ENCODE measurements at regions of chr5 and their contacts with region 1.

Region 1: GRCh38 chr5:159049844-159050315 is 49.8 kb downstream of the EBF1 start:
- DNase-seq: no peak
- ATAC-seq: peak; percentile 1
- H3K4me3 ChIP-seq: peak overlapping the region; percentile 49
- H3K27ac ChIP-seq: peak overlapping the region; percentile 70
- H3K4me1 ChIP-seq: peaks cover 17% of the 10 kb centered on the region
- H3K27me3 ChIP-seq: no peaks in the 10 kb centered on the region
- CTCF ChIP-seq: peak; percentile 15 to 45 (median 32); a peak in 5 of 6 replicates
- EP300 ChIP-seq: no peak
- POLR2A ChIP-seq: no peak
- RAD21 ChIP-seq: peak; percentile 59

Region 2: GRCh38 chr5:159034083-159034824 is 15.6 kb before region 1 on chr5:
- CTCF ChIA-PET with region 1: interaction called, 16 read pairs
- POLR2A ChIA-PET with region 1: interaction called, 5 read pairs
- RAD21 ChIA-PET with region 1: interaction called, 10 read pairs
- SMC1A ChIA-PET with region 1: interaction called, 62 read pairs
- in situ Hi-C with region 1: no loop called
- intact Hi-C with region 1: no loop called
- DNase-seq: no peak
- ATAC-seq: peak; percentile 84
- H3K4me3 ChIP-seq: peak overlapping the region; percentile 33
- H3K27ac ChIP-seq: peak overlapping the region; percentile 61
- H3K4me1 ChIP-seq: peaks cover 37% of the 10 kb centered on the region
- H3K27me3 ChIP-seq: no peaks in the 10 kb centered on the region
- CTCF ChIP-seq: no peak
- EP300 ChIP-seq: no peak
- POLR2A ChIP-seq: no peak
- RAD21 ChIP-seq: no peak

Region 3: DNA sequence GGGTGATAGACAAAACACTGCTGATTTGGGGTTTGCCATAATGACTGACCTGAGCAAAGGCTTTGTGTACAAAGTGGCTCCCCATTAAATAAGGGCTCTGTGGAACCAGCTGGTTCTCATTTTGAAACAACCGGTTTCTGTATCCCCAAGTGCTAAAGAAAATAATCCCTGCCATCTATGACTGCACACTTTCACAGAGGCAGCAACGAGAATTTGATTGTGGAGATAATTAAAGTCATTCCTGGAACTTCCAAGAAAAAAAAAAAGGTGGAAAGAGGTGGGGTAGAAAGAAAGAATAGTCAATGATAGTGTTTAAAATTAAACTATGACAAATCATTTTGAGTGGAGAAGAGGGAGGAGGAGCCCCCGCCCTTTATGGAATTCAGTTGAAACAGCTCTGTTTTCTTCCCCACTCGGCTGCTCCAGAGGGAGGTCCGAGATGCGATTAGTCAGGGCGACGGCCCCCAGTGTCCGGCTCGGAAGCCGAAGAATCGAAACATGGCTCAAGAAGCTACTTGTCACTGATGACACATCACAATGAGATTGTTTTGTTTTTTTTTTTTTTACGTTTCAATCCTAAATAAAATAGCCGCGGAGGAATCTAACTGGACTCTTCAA is 11.4 kb after region 1 on chr5:
- CTCF ChIA-PET with region 1: interaction called, 4 read pairs
- POLR2A ChIA-PET with region 1: interaction called, 6 read pairs
- RAD21 ChIA-PET with region 1: interaction called, 11 read pairs
- SMC1A ChIA-PET with region 1: interaction called, 12 read pairs
- in situ Hi-C with region 1: no loop called
- intact Hi-C with region 1: no loop called
- DNase-seq: no peak
- ATAC-seq: peak; percentile 39
- H3K4me3 ChIP-seq: no peak overlapping the region
- H3K27ac ChIP-seq: no peak overlapping the region
- H3K4me1 ChIP-seq: peaks cover 12% of the 10 kb centered on the region; the same call in 1 of the 2 replicates
- H3K27me3 ChIP-seq: no peaks in the 10 kb centered on the region
- CTCF ChIP-seq: no peak
- EP300 ChIP-seq: no peak
- POLR2A ChIP-seq: no peak
- RAD21 ChIP-seq: no peak

Region 4: DNA sequence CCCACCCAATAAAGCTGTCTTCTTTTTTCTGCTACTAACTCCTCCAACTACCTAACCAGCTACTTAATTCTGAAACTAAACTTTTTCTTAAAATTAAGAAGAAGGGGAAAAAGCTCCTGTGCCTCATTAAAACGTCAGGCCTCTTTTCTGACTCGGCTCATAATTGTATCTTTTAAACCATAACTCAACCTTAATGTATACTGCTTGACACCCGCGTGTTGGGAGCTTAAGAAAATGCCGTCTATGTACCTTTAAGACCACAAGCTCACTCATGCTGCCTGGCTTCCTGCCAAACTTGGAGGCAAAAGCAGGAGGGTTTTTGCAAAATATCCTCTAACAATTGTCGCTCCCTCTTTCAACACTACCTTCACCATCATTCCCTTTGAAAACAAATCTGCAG is 44.9 kb after region 1 on chr5:
- CTCF ChIA-PET with region 1: interaction called, 5 read pairs
- POLR2A ChIA-PET with region 1: interaction called, 19 read pairs
- RAD21 ChIA-PET with region 1: interaction called, 14 read pairs
- SMC1A ChIA-PET with region 1: interaction called, 17 read pairs
- in situ Hi-C with region 1: no loop called
- intact Hi-C with region 1: loop called (anchors 2 kb)
- DNase-seq: no peak
- ATAC-seq: peak; percentile 35
- H3K4me3 ChIP-seq: peak overlapping the region; percentile 88
- H3K27ac ChIP-seq: peak overlapping the region; percentile 68
- H3K4me1 ChIP-seq: peaks cover 5% of the 10 kb centered on the region; the same call in 1 of the 2 replicates
- H3K27me3 ChIP-seq: no peaks in the 10 kb centered on the region
- CTCF ChIP-seq: no peak
- EP300 ChIP-seq: no peak
- POLR2A ChIP-seq: no peak
- RAD21 ChIP-seq: no peak

Region 5: DNA sequence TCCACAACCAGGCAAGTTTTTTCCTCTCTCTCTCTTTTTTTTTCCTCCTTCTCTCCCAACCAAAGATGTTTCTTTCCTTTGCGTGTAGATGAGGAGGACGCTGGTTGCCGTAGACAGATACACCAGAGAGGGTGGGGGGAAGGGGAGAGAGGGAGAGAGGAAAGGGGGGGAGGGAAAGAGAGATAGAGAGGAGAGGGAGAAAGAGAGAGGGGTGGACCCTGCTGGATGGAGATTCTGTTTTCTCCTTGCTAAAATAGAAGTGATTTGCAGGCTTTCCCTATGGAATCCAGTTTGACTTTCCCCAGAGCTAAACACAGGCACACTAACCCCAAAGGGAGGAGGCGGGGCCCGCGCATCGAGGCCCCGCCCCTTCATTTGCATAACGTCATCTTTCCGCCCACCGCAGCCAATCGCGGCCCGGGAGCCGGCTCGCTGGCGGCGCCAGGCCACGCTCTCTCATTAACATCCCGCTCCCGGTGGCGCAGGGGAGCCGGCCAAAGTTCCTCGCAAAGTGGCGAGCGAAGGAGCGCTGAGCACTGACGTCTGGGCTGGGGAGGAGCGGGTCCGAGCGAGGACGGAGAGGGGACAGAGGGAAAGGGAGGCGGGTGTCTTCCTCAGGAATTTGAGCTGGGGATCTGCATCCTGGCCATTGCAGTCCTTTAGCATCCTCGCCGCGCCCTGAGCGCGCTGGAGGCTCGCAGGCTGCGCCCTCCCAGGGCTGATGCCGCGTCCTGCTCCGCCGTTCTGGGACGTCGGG is 50.3 kb after region 1 on chr5:
- CTCF ChIA-PET with region 1: interaction called, 7 read pairs
- POLR2A ChIA-PET with region 1: interaction called, 5 read pairs
- RAD21 ChIA-PET with region 1: interaction called, 14 read pairs
- SMC1A ChIA-PET with region 1: interaction called, 16 read pairs
- in situ Hi-C with region 1: no loop called
- intact Hi-C with region 1: loop called (anchors 2 kb)
- DNase-seq: peak; percentile 81
- ATAC-seq: peak; percentile 58
- H3K4me3 ChIP-seq: peak overlapping the region; percentile 67
- H3K27ac ChIP-seq: peak overlapping the region; percentile 67
- H3K4me1 ChIP-seq: peaks cover 5% of the 10 kb centered on the region
- H3K27me3 ChIP-seq: no peaks in the 10 kb centered on the region
- CTCF ChIP-seq: no peak
- EP300 ChIP-seq: peak in 1 of 2 experiments; percentile 1; a peak in 2 of 4 replicates
- POLR2A ChIP-seq: peak; percentile 93
- RAD21 ChIP-seq: no peak